Mammary epithelial cell (primary cell): ENCODE measurements at regions of chr7 and their contacts with region 1.

Region 1: DNA sequence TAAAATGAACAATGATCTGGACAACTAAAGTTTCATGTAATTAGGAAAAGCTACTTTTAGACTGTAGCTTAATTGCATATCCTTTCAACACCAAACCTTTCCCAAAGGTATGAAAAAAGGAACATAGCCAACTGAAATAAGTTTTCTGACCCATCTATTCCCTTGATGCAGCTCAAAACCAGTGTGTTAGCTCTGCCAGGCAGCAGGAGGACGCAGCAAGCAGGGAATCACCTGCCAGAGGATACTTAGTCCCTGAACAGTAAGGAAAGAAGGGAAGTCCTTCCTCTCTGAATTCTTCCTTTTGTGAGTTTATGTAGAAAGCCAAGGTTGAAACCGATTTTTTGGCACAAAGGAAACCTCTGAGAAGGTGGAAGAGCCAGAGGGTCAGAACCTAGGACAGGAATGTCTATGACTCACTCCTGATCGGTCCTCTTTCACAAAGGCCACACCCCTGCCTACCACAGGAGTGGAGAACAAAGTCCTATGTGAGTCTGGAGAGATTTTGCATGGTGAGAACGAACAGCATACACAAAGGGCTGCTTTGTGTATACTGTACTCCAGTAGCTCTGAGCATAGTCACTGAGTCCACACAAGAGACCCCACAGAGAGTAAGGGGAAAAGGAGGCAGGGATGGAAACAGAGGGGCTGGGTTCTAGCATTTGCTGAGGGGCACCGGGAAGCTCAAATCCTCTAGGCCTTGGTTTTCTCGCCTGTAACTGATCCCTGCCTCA is 68.8 kb upstream of the GSDME start:
- DNase-seq: peak; percentile 97
- H3K4me3 ChIP-seq: peak overlapping the region in 2 of 3 experiments; percentile 9 to 25
- H3K27ac ChIP-seq: peak overlapping the region; percentile 99
- H3K4me1 ChIP-seq: peaks cover 82% of the 10 kb centered on the region
- H3K27me3 ChIP-seq: no peaks in the 10 kb centered on the region
- CTCF ChIP-seq: peak in 1 of 2 donors; percentile 11

Region 2: DNA sequence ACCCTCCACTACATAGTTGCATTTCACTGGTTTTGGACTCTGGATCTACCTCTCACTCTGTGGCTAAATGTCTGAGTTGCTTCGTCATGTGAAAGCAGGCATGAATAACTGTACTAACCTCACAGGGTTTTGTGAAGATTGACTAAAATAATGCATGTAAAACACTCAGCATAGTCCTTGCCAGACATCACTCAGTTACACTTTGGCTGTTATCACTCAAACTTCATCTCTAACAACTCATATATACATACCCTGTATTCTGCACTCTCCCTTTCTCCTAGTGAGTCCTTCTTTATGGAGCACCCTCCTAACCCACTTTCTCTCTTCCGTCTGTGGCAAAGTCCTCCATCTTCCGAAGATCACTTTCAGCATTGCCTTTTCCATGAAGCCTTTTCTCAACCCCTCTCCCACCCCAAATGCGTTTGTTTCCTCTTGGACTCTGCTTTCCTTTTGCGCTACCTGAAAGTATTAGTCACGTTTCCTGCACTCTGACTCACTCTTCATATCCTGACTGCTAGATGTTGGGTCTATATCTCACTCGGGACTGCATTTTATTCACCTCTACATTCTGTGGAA is 81.3 kb after region 1 on chr7:
- CTCF ChIA-PET with region 1: no interaction called
- dilution Hi-C with region 1: loop called (anchors 5 kb)
- in situ Hi-C with region 1: no loop called
- intact Hi-C with region 1: no loop called
- DNase-seq: peak; percentile 87
- H3K4me3 ChIP-seq: peak overlapping the region in 2 of 3 experiments; percentile 18 to 36
- H3K27ac ChIP-seq: peak overlapping the region; percentile 77
- H3K4me1 ChIP-seq: peaks cover 62% of the 10 kb centered on the region
- H3K27me3 ChIP-seq: no peaks in the 10 kb centered on the region
- CTCF ChIP-seq: no peak

Region 3: DNA sequence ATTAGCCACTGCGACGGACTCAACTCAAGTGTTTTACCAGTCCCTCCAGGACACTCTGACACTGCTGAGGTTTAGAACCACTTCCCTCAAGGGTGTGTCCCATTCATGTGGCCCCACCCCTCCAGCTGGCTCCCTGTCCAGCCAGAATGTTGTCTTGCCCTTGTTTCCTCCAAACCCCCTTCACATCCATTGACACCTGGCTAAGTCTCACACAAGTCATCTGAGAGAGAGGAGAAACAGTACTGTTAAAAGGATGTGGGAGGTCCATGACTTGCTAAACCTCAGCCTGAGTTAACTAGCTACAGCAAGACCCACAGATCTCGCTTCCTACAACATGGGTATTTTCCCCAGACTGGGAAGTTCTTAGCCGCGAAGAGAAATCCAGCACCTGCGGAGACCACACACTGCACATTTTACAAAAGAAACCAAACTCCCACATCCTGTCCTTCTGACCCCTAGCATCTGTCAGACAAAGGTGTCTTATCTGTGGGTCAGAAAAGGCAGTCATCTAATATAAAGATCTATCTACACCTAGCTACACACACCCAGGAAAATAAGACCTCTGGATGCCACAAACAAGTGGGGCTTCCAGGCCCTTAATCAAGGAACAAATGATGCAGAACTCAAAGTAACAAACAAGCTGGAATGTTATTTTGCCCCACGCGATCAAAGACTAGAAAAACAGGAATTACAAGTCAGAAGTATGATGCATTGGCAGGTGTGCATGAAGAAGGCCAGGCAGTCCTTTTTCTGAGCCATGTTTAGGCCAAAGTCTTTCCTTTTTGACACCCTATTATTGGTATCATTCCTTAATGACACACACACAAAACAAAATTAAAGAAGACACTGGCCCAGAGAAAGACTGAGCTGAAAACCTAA is 140.0 kb after region 1 on chr7:
- CTCF ChIA-PET with region 1: no interaction called
- dilution Hi-C with region 1: no loop called
- in situ Hi-C with region 1: loop called in 1 of 2 experiments (anchors 5 kb)
- intact Hi-C with region 1: loop called (anchors 2 kb)
- DNase-seq: peak; percentile 76
- H3K4me3 ChIP-seq: no peak overlapping the region
- H3K27ac ChIP-seq: peak overlapping the region; percentile 55
- H3K4me1 ChIP-seq: peaks cover 70% of the 10 kb centered on the region
- H3K27me3 ChIP-seq: no peaks in the 10 kb centered on the region
- CTCF ChIP-seq: no peak